A549 (cell line): ENCODE measurements at regions of chr11 and their contacts with region 1.

Region 1: DNA sequence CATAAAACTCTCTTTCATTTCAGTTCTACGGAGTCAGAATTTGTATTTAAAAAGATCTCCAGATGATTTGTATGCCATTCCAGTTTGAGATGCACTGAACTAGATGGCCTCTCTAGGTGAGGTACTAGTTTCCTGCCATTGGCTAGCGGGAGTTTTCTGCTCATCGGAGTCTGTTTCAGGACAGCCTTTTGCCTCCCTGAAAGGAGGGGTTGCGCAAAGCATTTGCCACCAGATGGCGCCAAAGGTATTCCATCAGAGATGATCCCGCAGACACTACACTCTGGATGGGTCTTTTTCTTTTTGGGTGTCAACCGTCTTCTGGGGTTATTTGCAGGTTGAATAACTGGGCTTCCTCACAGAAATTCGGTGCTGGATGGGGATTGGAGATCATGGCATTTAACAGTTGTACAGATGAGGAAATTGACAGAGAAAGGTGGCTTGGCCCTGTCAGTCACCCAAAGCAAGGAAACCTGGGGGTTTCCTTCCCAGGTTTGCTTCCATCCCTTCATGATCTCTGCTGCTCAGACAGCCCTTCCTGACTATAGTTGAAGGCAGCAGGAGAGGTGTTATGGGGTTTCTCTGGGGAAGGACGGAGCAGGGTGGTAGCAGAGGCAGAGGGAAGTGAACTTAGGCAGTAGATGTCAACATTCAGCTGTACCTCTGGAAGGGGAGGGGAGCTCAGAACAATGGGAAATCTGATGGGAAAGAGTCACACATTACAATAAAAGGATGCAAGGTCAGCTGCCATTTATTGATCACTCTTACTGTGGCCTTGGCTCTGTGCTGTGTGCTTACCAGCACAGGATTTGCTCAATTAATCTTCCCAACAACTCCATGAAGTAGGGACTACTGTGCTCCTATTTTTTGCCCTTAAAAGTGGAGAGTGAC is 81.6 kb downstream of the CCDC81 start:
- DNase-seq: peak; percentile 79 to 84
- ATAC-seq: peak; percentile 82 to 93
- H3K4me3 ChIP-seq: no peak overlapping the region
- H3K27ac ChIP-seq: peak overlapping the region; percentile 68 to 85
- H3K4me1 ChIP-seq: peaks cover 43% of the 10 kb centered on the region
- CTCF ChIP-seq: peak; percentile 97
- EP300 ChIP-seq: no peak
- POLR2A ChIP-seq: no peak
- RAD21 ChIP-seq: peak; percentile 99

Region 2: GRCh38 chr11:86335122-86335767 is 121.1 kb before region 1 on chr11:
- CTCF ChIA-PET with region 1: no interaction called
- POLR2A ChIA-PET with region 1: no interaction called
- DNase-seq: no peak
- ATAC-seq: no peak
- H3K4me3 ChIP-seq: no peak overlapping the region
- H3K27ac ChIP-seq: 0 out of 6 replicates have a peak overlapping the region, but pooled peaks of 1 of the 2 experiments have one; percentile 5
- H3K4me1 ChIP-seq: no peaks in the 10 kb centered on the region; the same call in 2 of the 3 replicates
- CTCF ChIP-seq: no peak
- EP300 ChIP-seq: no peak
- POLR2A ChIP-seq: no peak
- RAD21 ChIP-seq: no peak

Region 3: GRCh38 chr11:86442420-86442819 is 13.9 kb before region 1 on chr11:
- CTCF ChIA-PET with region 1: interaction called, 13 read pairs
- POLR2A ChIA-PET with region 1: no interaction called
- DNase-seq: peak in 1 of 2 experiments; percentile 12
- ATAC-seq: peak in 1 of 2 experiments; percentile 33; a peak in 2 of 6 replicates
- H3K4me3 ChIP-seq: no peak overlapping the region
- H3K27ac ChIP-seq: peak overlapping the region in 1 of 2 experiments; percentile 29; a peak in 2 of 6 replicates
- H3K4me1 ChIP-seq: peaks cover 16% of the 10 kb centered on the region
- CTCF ChIP-seq: no peak
- EP300 ChIP-seq: no peak
- POLR2A ChIP-seq: no peak
- RAD21 ChIP-seq: no peak

Region 4: DNA sequence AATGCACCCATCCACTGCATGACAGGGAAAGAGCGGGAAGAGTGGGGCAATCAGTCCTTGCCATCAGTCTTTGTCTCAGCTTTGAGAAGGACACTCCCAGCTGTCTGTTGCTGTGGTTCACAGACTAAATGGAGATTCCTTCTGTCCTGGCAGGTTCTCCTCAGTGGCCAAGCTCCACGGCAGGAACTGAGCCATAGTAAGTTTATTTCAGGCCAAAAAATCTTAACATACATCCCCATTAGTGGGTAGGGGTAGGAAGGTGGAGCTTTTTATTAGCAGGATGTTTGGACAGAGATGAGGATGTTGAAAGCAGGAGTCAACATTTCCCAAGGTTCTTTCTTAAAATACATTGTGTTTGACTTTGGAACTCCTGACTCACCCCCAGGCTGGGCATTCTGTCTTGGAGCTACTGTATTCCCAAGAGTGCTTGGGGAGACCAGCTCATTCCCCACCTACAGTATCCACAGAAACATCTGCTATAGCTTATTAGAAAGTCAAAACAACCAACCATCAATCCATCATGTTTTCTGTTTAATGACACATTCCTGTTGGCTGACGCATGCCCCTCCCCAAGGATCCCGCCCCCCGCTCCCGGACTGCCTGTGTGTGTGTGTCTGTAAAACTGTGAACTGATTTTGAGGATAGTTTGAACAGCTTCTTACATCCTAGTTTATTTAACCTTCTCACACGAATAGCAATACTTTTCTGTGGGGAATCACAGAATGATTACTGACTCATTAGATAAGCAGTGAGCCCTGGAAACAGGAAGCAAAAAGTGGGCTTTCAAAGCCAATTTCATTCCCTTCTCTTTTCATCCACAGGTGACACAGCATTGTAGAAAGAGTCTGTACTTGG is 27.9 kb after region 1 on chr11:
- CTCF ChIA-PET with region 1: interaction called, 60 read pairs
- POLR2A ChIA-PET with region 1: interaction called, 6 read pairs
- DNase-seq: peak; percentile 91 to 97
- ATAC-seq: peak; percentile 95
- H3K4me3 ChIP-seq: no peak overlapping the region
- H3K27ac ChIP-seq: peak overlapping the region; percentile 77 to 89
- H3K4me1 ChIP-seq: peaks cover 60% of the 10 kb centered on the region
- CTCF ChIP-seq: no peak
- EP300 ChIP-seq: peak; percentile 94 to 96; a peak in 4 of 5 replicates
- POLR2A ChIP-seq: no peak
- RAD21 ChIP-seq: peak; percentile 19 to 61

Region 5: GRCh38 chr11:86523738-86524619 is 67.7 kb after region 1 on chr11:
- CTCF ChIA-PET with region 1: interaction called, 11 read pairs
- POLR2A ChIA-PET with region 1: interaction called, 3 read pairs
- DNase-seq: peak; percentile 97 to 98
- ATAC-seq: peak; percentile 94 to 98
- H3K4me3 ChIP-seq: no peak overlapping the region
- H3K27ac ChIP-seq: peak overlapping the region; percentile 90
- H3K4me1 ChIP-seq: peaks cover 41% of the 10 kb centered on the region
- CTCF ChIP-seq: no peak
- EP300 ChIP-seq: peak; percentile 98
- POLR2A ChIP-seq: no peak
- RAD21 ChIP-seq: peak; percentile 57 to 75

Region 6: DNA sequence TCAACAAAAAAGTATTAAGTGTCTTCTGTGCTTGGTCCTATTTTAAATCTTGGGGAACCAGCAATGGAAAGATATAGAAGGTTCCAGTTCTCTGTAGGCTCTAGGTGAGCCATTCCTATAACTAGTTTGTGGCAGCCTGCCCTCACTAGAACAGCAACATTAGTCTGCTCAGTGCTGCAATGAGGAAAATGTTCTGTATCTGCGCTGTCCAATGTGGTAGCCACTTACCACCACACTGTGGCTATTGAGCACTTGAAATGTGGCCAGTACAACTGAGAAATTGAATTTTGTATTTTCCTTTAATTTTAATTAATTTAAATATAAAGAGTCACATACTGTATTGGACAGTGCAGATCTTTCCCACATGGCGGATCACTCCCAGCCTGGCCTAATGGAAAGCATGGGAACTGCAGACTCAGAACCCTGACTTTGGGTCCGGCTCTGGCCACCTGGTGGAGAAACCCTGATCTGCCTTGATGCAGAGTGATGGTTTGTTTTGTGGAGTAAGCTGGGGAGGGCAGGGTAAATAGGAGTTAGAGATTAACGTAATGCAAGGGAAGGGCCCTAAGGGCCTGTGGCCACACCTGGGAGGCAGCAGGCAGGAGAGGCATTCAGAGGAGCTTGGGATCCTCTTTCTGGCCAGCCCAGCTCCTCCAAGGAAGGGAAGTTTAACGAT is 115.1 kb after region 1 on chr11:
- CTCF ChIA-PET with region 1: interaction called, 17 read pairs
- POLR2A ChIA-PET with region 1: no interaction called
- DNase-seq: peak; percentile 69 to 88
- ATAC-seq: peak; percentile 84 to 94
- H3K4me3 ChIP-seq: no peak overlapping the region
- H3K27ac ChIP-seq: peak overlapping the region; percentile 52 to 78
- H3K4me1 ChIP-seq: peaks cover 69% of the 10 kb centered on the region
- CTCF ChIP-seq: peak; percentile 60
- EP300 ChIP-seq: no peak
- POLR2A ChIP-seq: no peak
- RAD21 ChIP-seq: peak; percentile 59 to 73